CD8-positive, alpha-beta T cell (primary cell): ENCODE measurements at regions of chr6 and their contacts with region 1.

Region 1: GRCh38 chr6:53294095-53294494 is 54.7 kb downstream of the ELOVL5 start:
- DNase-seq: peak in 7 of 9 experiments; percentile 21 to 63 (median 45)
- ATAC-seq: peak; percentile 49
- H3K4me3 ChIP-seq: no peak overlapping the region
- H3K4me3 Mint-ChIP-seq: no peak overlapping the region
- H3K27ac ChIP-seq: peak overlapping the region in 1 of 2 experiments; percentile 6
- H3K27ac Mint-ChIP-seq: peak overlapping the region; percentile 10
- H3K4me1 ChIP-seq: peaks cover 34% of the 10 kb centered on the region
- H3K4me1 Mint-ChIP-seq: peaks cover 76% of the 10 kb centered on the region
- H3K27me3 ChIP-seq: no peaks in the 10 kb centered on the region
- H3K27me3 Mint-ChIP-seq: no peaks in the 10 kb centered on the region
- CTCF ChIP-seq: peak; percentile 66

Region 2: DNA sequence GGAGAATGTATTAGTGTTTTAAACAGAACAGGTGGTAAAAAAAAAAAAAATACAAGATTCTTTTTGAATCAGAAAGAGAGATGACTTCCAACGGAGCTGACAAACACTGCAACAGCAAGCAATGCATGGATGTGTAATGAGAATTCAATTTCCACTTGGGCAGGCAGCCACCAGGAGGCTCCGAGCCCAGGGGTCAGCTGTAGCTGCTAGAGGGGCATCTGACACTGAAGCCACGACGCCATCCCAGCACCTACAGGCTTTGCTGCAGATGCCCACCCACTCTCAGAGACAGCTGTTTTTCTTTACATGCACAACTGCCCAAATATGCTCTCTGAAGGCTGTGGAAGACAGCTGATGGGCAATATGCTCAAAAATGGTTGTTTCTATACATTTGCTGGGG is 20.7 kb before region 1 on chr6:
- CTCF ChIA-PET with region 1: interaction called, 15 read pairs
- POLR2A ChIA-PET with region 1: interaction called, 4 read pairs
- intact Hi-C with region 1: no loop called
- DNase-seq: no peak
- ATAC-seq: no peak
- H3K4me3 ChIP-seq: no peak overlapping the region
- H3K4me3 Mint-ChIP-seq: no peak overlapping the region
- H3K27ac ChIP-seq: no peak overlapping the region
- H3K27ac Mint-ChIP-seq: no peak overlapping the region
- H3K4me1 ChIP-seq: no peaks in the 10 kb centered on the region
- H3K4me1 Mint-ChIP-seq: peaks cover 3% of the 10 kb centered on the region
- H3K27me3 ChIP-seq: no peaks in the 10 kb centered on the region
- H3K27me3 Mint-ChIP-seq: no peaks in the 10 kb centered on the region
- CTCF ChIP-seq: no peak

Region 3: GRCh38 chr6:53335208-53335994 is 41.3 kb after region 1 on chr6:
- CTCF ChIA-PET with region 1: interaction called, 14 read pairs
- POLR2A ChIA-PET with region 1: interaction called, 11 read pairs
- intact Hi-C with region 1: no loop called
- DNase-seq: peak; percentile 52 to 94 (median 76)
- ATAC-seq: peak; percentile 83
- H3K4me3 ChIP-seq: peak overlapping the region; percentile 38 to 54
- H3K4me3 Mint-ChIP-seq: peak overlapping the region; percentile 84
- H3K27ac ChIP-seq: peak overlapping the region; percentile 82 to 98
- H3K27ac Mint-ChIP-seq: peak overlapping the region; percentile 98
- H3K4me1 ChIP-seq: peaks cover 76% of the 10 kb centered on the region
- H3K4me1 Mint-ChIP-seq: peaks cover 91% of the 10 kb centered on the region
- H3K27me3 ChIP-seq: no peaks in the 10 kb centered on the region
- H3K27me3 Mint-ChIP-seq: no peaks in the 10 kb centered on the region
- CTCF ChIP-seq: no peak

Region 4: GRCh38 chr6:53348371-53349208 is 54.5 kb after region 1 on chr6 and contains the start of gene ELOVL5:
- CTCF ChIA-PET with region 1: interaction called, 22 read pairs
- POLR2A ChIA-PET with region 1: interaction called, 16 read pairs
- intact Hi-C with region 1: loop called (anchors 2 to 5 kb)
- DNase-seq: peak; percentile 82 to 99 (median 93)
- ATAC-seq: peak; percentile 76
- H3K4me3 ChIP-seq: peak within 1 kb of the TSS; percentile 83 to 91
- H3K4me3 Mint-ChIP-seq: peak within 1 kb of the TSS; percentile 96
- H3K27ac ChIP-seq: peak within 1 kb of the TSS; percentile 80 to 94
- H3K27ac Mint-ChIP-seq: peak within 1 kb of the TSS; percentile 96
- H3K4me1 ChIP-seq: peaks cover 38% of the 10 kb centered on the region
- H3K4me1 Mint-ChIP-seq: peaks cover 48% of the 10 kb centered on the region
- H3K27me3 ChIP-seq: no peaks in the 10 kb centered on the region
- H3K27me3 Mint-ChIP-seq: no peaks in the 10 kb centered on the region
- CTCF ChIP-seq: no peak
- total RNA-seq, gene ELOVL5: 79.1 to 82.7 TPM

Region 5: DNA sequence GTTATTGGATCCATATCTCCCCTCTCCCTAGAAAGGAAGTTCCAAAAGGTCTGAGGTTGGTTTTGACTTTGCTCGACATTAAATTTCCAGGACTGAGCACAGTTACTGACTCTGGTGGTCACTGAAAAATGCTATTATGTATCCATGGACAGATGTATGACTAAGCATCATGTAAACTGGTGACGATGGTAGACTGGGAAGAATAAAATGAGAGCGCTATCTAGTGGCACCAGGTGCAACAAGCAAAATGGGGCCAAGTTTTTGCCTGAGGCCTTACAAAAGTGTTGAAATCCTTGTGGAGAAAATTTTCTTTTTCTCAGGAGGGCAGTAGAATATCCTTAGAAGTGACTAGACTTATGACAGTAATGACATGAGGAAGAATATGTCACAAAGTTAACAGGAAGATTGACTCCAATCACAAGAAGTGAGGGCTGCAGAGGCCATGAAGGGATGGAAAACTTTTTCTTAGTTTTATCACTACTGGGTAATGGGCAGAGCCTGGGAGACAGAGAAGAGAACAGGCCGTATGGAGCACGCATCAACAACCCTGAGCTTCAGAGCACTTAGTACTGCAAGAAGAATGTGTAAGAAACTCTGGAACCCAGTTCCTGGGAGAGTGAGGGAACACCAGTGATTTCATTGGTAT is 143.6 kb after region 1 on chr6:
- CTCF ChIA-PET with region 1: no interaction called
- POLR2A ChIA-PET with region 1: no interaction called
- intact Hi-C with region 1: loop called in 1 of 2 experiments (anchors 1 kb)
- DNase-seq: peak in 4 of 9 experiments; percentile 4 to 56 (median 28)
- ATAC-seq: no peak
- H3K4me3 ChIP-seq: no peak overlapping the region
- H3K4me3 Mint-ChIP-seq: no peak overlapping the region
- H3K27ac ChIP-seq: no peak overlapping the region
- H3K27ac Mint-ChIP-seq: no peak overlapping the region
- H3K4me1 ChIP-seq: no peaks in the 10 kb centered on the region
- H3K4me1 Mint-ChIP-seq: no peaks in the 10 kb centered on the region
- H3K27me3 ChIP-seq: no peaks in the 10 kb centered on the region
- H3K27me3 Mint-ChIP-seq: peaks cover 4% of the 10 kb centered on the region
- CTCF ChIP-seq: peak; percentile 51

Region 6: DNA sequence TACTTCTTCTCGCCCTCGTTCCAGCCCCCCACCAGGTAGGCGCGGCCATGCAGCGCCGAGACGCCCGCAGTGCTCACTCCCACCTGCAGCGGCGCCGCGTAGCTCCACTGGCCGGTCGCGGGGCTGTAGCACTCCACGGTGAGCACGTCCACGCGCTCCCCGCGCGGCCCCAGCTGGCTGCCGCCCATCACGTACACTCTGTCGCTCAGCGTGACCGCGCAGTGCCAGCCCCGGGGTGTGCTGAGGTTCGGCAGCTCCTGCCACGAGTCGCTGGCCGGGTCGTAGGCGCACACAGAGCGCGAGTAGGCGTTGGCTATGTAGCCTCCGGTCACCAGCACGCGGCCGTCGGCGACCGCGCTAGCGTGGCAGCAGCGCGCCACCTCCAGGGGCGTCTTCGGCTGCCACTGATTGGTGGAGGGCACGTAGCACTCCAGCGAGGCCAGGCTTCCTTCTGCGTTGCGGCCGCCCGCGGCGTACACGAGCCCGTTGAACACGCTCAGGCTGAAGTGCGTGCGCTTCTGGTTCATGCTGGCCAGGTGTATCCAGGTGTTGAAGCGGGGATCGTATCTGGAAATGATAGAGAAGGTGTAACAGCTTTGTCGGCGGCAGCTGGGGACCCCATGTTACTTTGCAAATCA is 357.8 kb after region 1 on chr6:
- CTCF ChIA-PET with region 1: no interaction called
- POLR2A ChIA-PET with region 1: no interaction called
- intact Hi-C with region 1: loop called in 1 of 2 experiments (anchors 10 kb)
- DNase-seq: peak; percentile 57 to 91 (median 79)
- ATAC-seq: peak; percentile 86
- H3K4me3 ChIP-seq: peak overlapping the region; percentile 67 to 81
- H3K4me3 Mint-ChIP-seq: peak overlapping the region; percentile 91
- H3K27ac ChIP-seq: peak overlapping the region; percentile 54 to 65
- H3K27ac Mint-ChIP-seq: peak overlapping the region; percentile 89
- H3K4me1 ChIP-seq: peaks cover 32% of the 10 kb centered on the region
- H3K4me1 Mint-ChIP-seq: peaks cover 32% of the 10 kb centered on the region
- H3K27me3 ChIP-seq: no peaks in the 10 kb centered on the region
- H3K27me3 Mint-ChIP-seq: no peaks in the 10 kb centered on the region
- CTCF ChIP-seq: no peak

Region 7: DNA sequence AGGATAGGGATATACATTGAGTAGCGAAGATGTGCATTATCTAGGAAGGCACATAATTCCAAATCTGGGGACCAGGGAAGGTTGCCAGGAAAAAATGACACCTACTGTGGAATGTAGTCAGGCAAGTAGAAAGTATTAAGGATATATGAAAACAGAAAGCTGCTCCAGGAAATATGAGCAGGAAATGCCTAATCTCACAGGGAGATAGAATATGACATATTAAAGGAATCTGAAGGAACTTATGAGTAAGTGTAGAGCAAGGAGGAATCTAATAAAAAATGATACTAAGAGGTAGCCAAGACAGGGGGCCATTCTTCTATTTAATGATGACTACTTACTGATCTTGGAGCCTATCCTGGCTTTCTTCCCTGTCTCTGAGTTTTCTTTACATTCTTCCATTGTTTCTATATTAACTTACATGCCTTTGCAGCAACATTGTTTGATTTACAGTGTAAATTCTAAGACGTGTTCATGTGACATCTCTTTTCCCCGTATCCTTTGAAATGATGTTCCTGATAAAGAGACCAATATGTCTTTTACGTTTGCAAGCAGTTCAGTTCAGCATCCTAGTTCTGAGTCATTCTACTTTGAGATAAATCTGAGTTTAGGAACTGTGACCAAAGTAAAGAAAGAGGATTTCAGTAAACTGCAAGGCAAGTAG is 1072.7 kb after region 1 on chr6:
- CTCF ChIA-PET with region 1: no interaction called
- POLR2A ChIA-PET with region 1: no interaction called
- intact Hi-C with region 1: no loop called
- DNase-seq: no peak
- ATAC-seq: no peak
- H3K4me3 ChIP-seq: no peak overlapping the region
- H3K4me3 Mint-ChIP-seq: no peak overlapping the region
- H3K27ac ChIP-seq: no peak overlapping the region
- H3K27ac Mint-ChIP-seq: no peak overlapping the region
- H3K4me1 ChIP-seq: no peaks in the 10 kb centered on the region
- H3K4me1 Mint-ChIP-seq: no peaks in the 10 kb centered on the region
- H3K27me3 ChIP-seq: no peaks in the 10 kb centered on the region
- H3K27me3 Mint-ChIP-seq: no peaks in the 10 kb centered on the region
- CTCF ChIP-seq: no peak